MCF 10A (cell line): ENCODE measurements at regions of chr3 and their contacts with region 1.

Region 1: GRCh38 chr3:23800731-23801130 is 5.0 kb upstream of the UBE2E1 start:
- DNase-seq: no peak
- H3K4me3 Mint-ChIP-seq: no peak overlapping the region
- H3K27ac Mint-ChIP-seq: no peak overlapping the region
- H3K4me1 Mint-ChIP-seq: peaks cover 7% of the 10 kb centered on the region
- H3K27me3 Mint-ChIP-seq: no peaks in the 10 kb centered on the region
- CTCF ChIP-seq: no peak

Region 2: DNA sequence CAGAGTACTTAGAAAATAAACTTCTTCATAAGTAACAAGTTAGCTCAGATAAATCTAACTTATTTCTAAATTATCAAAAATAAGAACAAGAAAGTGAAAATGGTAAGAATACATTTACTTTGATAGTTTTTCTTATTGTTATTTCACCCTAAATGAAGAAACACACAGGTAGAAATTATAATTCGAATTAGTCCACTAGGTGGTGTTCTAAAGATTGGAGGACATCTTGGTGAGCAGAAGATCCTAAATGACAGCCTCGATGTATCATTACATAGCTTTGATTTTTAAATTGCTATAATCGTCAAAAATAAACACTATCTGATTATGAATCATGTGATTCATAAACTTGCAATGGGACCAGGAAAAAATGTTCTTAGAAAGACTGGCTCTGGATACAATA is 878.4 kb before region 1 on chr3:
- CTCF ChIA-PET with region 1: no interaction called
- POLR2A ChIA-PET with region 1: no interaction called
- intact Hi-C with region 1: loop called (anchors 1 kb)
- DNase-seq: peak; percentile 34
- H3K4me3 Mint-ChIP-seq: no peak overlapping the region
- H3K27ac Mint-ChIP-seq: no peak overlapping the region
- H3K4me1 Mint-ChIP-seq: peaks cover 7% of the 10 kb centered on the region
- H3K27me3 Mint-ChIP-seq: no peaks in the 10 kb centered on the region
- CTCF ChIP-seq: peak; percentile 26

Region 3: DNA sequence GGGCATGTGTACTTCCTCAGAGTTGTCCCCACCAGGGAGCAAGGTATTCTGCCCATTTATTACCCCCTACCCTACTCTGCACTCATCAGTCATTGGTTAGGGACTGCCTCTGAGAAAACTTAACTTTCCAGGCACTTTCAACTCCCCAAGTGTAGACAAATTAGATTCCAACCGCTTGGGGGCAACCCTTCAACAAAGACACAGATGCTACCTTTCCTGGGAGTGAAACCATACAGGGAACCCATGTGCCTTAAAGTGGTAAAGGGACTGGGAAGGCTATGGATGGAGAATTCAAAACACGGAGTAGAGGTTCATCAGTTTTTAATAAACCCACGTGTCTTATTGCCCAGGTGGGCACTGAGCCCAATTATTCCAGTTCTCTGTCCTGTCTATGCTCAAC is 617.0 kb before region 1 on chr3:
- CTCF ChIA-PET with region 1: interaction called, 4 read pairs
- POLR2A ChIA-PET with region 1: no interaction called
- intact Hi-C with region 1: loop called (anchors 1 kb)
- DNase-seq: peak; percentile 79
- H3K4me3 Mint-ChIP-seq: no peak overlapping the region
- H3K27ac Mint-ChIP-seq: no peak overlapping the region
- H3K4me1 Mint-ChIP-seq: no peaks in the 10 kb centered on the region
- H3K27me3 Mint-ChIP-seq: no peaks in the 10 kb centered on the region
- CTCF ChIP-seq: peak; percentile 64

Region 4: DNA sequence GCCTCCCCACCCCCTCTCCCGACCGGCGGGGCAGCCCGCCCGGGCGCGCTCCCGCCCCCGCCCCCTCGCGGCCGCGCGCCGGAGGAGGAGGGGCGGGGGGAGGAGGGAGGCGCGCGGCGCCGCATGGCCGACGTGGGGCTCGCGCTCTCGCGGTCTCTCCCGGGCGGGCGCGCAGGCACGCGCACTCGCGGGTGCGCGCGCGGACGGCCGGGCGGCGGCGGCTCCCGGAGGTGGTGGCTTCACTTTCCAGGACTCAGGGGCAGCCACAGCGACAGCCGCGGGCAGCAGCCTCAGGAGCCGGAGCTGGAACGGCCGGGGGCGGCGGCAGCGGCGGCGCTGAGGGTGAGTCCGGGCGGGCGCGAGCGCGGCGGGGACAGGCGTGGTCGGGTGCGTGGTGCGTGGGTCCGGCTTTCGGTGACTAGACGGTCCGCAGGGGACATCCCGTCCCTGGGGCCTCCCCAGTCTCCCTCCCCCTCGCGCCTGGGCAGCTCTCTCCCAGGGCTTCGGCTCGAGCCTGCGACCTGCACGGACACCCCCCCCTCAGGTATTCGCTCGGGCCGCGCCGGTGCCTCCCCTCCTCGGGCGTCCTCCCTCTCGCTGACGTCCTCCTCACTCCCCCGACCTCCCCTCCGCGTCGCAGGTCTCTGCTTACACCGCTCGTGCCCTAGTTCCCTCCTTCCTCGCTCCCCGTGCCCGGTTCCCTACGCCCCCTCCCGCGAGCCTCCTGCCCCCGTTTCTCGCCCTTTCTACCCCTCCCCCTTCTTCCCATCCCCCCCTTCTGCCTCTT is 597.6 kb before region 1 on chr3 and contains the start of gene UBE2E2:
- CTCF ChIA-PET with region 1: no interaction called
- POLR2A ChIA-PET with region 1: no interaction called
- intact Hi-C with region 1: loop called (anchors 5 kb)
- DNase-seq: peak; percentile 55
- H3K4me3 Mint-ChIP-seq: peak within 1 kb of the TSS; percentile 87
- H3K27ac Mint-ChIP-seq: peak within 1 kb of the TSS; percentile 39
- H3K4me1 Mint-ChIP-seq: peaks cover 12% of the 10 kb centered on the region
- H3K27me3 Mint-ChIP-seq: peaks cover 7% of the 10 kb centered on the region
- CTCF ChIP-seq: no peak
- total RNA-seq, gene UBE2E2: 64.3 and 69.4 TPM in 2 replicates

Region 5: DNA sequence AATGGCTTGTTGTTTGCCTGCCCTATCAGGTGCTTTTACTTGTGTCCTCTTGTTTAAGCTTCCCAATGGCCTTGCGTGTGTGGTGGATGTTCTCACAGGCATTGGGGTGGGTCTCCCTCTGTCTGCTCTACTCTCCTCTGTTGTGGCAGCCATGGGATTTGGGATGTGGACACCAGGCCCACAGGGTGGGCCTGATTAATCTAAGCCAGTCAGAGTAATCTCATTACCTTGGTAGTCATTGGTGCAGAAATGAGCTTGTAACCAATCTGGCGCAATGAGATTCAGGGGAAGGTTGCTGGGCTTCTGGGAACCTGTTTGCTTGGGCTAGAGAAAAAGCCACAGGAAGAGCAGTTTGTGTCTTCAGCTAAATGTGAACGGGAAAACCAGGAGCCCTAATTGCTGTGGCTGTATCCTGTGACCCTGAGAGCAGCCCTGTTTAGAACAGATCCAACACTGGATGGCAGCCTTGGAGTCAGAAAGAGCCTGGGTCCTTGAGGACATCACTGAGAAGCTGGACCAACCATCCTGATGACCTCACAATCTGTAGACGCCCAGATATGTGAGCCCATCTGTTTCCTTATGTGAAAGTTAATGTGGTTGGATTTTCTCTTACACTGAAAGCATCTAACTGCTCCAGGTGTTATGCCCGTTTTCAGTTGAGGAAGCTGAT is 152.3 kb before region 1 on chr3:
- CTCF ChIA-PET with region 1: no interaction called
- POLR2A ChIA-PET with region 1: no interaction called
- intact Hi-C with region 1: loop called (anchors 1 kb)
- DNase-seq: peak; percentile 54
- H3K4me3 Mint-ChIP-seq: no peak overlapping the region
- H3K27ac Mint-ChIP-seq: no peak overlapping the region
- H3K4me1 Mint-ChIP-seq: peaks cover 29% of the 10 kb centered on the region
- H3K27me3 Mint-ChIP-seq: no peaks in the 10 kb centered on the region
- CTCF ChIP-seq: no peak

Region 6: DNA sequence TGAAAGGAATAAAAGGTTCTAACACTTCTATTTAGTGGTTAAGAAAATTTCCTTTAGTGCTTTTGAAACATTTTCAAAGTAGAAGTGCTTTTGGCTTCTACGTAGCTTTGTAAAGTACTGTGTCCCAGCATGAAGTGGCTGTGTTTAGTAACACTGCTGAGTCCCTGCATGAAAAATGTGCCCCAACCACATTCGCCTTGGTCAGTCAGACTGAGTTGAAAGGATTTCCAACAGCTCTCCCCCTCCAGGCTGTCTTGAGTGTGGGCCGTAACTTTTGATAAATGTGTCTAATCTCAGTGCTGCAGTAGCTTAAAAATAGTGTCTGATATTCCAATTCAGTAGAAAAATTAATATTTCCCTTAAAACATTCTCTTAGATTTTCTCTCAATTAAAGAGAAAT is 259.3 kb after region 1 on chr3:
- CTCF ChIA-PET with region 1: no interaction called
- POLR2A ChIA-PET with region 1: no interaction called
- intact Hi-C with region 1: no loop called
- DNase-seq: no peak
- H3K4me3 Mint-ChIP-seq: no peak overlapping the region
- H3K27ac Mint-ChIP-seq: no peak overlapping the region
- H3K4me1 Mint-ChIP-seq: no peaks in the 10 kb centered on the region
- H3K27me3 Mint-ChIP-seq: no peaks in the 10 kb centered on the region
- CTCF ChIP-seq: no peak